Posterior cingulate gyrus (tissue), 11 donors: ENCODE measurements at regions of chr3 and their contacts with region 1.

Region 1: GRCh38 chr3:42880601-42881451 is 5.1 kb upstream of the CYP8B1 start:
- DNase-seq: peak; percentile 71 to 98 (median 82)

Region 2: GRCh38 chr3:42430781-42431532 is 449.9 kb before region 1 on chr3:
- intact Hi-C with region 1: no loop called
- DNase-seq: no peak

Region 3: GRCh38 chr3:42804106-42804830 is 76.6 kb before region 1 on chr3 and contains the start of gene HIGD1A:
- intact Hi-C with region 1: no loop called
- DNase-seq: peak; percentile 95 to 100 (median 97)

Region 4: GRCh38 chr3:42831321-42831713 is 49.5 kb before region 1 on chr3:
- intact Hi-C with region 1: loop called (anchors 2 kb)
- DNase-seq: peak in 8 of 10 donors; percentile 19 to 92 (median 69)